Activated CD4-positive, alpha-beta T cell treated with anti-CD3 and anti-CD28 coated beads, Interleukin-2, amount 10 ng/mL, durations not matched to agents 24 days and 14 days (primary cell): ENCODE measurements at regions of chr9 and their contacts with region 1.

Region 1: DNA sequence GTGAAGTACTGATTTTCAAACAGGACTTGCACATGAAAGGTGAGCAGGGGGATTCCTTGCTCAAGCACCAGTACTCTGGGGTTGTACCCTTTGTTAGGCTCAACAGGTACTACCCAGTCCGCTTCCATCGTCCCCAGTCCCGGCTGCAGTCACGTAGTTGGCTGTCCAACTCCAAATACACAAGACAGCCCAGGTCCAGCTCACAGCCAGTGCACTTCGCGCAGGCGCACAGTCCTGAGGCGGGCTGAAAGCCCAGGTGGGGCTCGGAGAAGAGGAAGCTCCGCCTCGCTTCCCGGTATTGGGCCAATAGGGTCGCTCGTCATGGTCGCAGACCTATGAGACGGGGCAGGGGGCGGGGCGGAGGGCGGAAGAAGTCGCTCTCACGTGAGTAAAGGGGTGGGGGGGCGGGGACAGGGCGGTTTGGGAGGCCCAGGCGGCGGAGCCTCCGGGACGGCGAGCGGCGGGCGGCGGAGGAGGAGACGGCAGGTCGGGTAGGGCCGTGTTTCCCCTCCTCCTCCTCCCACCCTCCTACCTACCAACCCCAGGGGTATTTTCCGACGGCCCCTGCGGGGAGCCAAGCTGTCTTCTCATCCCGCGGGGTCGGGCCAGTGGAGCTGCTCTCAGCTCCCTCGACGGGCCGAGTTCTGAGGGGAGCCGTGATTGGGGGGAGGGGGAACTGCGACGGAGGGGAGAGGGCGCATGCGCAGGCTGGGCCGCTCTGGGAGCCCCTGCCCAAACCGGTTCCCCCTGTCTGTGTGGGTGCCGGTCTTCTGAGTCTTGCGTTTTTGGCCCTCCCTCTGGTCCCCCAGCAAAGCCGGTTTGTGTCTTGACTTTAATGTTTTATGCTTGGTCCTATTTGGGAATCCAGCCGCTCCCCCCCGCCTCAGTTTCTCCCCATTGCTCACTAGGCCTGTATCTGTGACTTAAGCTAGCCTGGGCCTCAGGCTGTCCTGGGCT is at the start of gene RABGAP1:
- DNase-seq: peak; percentile 99
- H3K4me3 Mint-ChIP-seq: peak within 1 kb of the TSS; percentile 99
- H3K27ac Mint-ChIP-seq: peak within 1 kb of the TSS; percentile 90
- H3K4me1 Mint-ChIP-seq: peaks cover 31% of the 10 kb centered on the region
- H3K27me3 Mint-ChIP-seq: no peaks in the 10 kb centered on the region
- total RNA-seq, gene RABGAP1: 23.9 and 25.7 TPM in 2 replicates

Region 2: GRCh38 chr9:122904823-122905710 is 35.8 kb before region 1 on chr9 and contains the start of gene RC3H2:
- intact Hi-C with region 1: loop called (anchors 1 kb)
- DNase-seq: peak; percentile 99
- H3K4me3 Mint-ChIP-seq: peak within 1 kb of the TSS; percentile 95
- H3K27ac Mint-ChIP-seq: peak within 1 kb of the TSS; percentile 96
- H3K4me1 Mint-ChIP-seq: peaks cover 19% of the 10 kb centered on the region
- H3K27me3 Mint-ChIP-seq: no peaks in the 10 kb centered on the region
- total RNA-seq, gene RC3H2: 39.7 and 40.2 TPM in 2 replicates

Region 3: GRCh38 chr9:122991370-122991830 is 50.5 kb after region 1 on chr9:
- intact Hi-C with region 1: loop called (anchors 5 kb)
- DNase-seq: peak; percentile 71
- H3K4me3 Mint-ChIP-seq: no peak overlapping the region
- H3K27ac Mint-ChIP-seq: peak overlapping the region; percentile 17
- H3K4me1 Mint-ChIP-seq: peaks cover 3% of the 10 kb centered on the region
- H3K27me3 Mint-ChIP-seq: no peaks in the 10 kb centered on the region

Region 4: GRCh38 chr9:123225374-123225813 is 284.5 kb after region 1 on chr9:
- intact Hi-C with region 1: loop called (anchors 10 kb)
- DNase-seq: peak; percentile 85
- H3K4me3 Mint-ChIP-seq: peak overlapping the region; percentile 54
- H3K27ac Mint-ChIP-seq: peak overlapping the region; percentile 78
- H3K4me1 Mint-ChIP-seq: peaks cover 21% of the 10 kb centered on the region
- H3K27me3 Mint-ChIP-seq: peaks cover 2% of the 10 kb centered on the region

Region 5: DNA sequence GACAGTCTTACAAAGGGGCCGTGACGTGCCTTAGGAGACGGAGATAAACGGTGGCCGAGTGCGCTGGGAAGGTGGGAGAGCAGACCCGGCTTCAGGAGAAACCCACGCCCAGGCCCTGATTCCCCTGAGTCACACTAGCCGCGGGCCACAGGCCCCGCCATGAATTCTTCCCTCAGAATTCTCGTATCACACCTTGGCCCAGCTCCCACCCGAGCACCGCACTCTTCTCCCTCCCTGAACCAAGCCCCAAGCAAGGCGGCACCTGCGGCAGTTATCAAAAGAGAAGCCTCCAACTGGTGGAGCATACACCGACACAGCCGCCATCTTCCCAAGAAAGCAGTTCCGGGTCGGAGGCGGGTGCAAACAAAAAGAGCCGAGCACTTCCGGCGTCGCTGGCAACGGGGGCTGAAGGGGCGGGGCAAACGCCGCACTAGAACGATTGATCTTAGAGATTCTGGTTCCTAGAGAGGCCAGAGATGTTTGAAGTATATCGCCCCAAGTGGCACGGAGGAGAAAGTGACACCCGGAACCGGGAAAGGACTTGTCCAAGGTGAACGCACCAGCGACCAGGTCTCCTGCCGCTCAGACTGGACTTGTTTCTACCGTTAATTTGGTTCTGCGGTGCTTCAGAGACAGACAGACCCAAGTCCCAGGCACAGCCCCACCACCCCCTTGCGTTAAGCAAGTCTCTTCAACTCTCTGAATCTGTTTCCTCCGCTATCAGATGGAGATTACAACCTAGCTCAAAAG is 1474.4 kb after region 1 on chr9 and contains the start of gene PSMB7:
- intact Hi-C with region 1: loop called (anchors 10 kb)
- DNase-seq: peak; percentile 99
- H3K4me3 Mint-ChIP-seq: peak within 1 kb of the TSS; percentile 96
- H3K27ac Mint-ChIP-seq: peak within 1 kb of the TSS; percentile 95
- H3K4me1 Mint-ChIP-seq: peaks cover 26% of the 10 kb centered on the region
- H3K27me3 Mint-ChIP-seq: no peaks in the 10 kb centered on the region
- total RNA-seq, gene PSMB7: 223 and 225 TPM in 2 replicates